ENCODE measurements at regions of chr1 and their contacts with region 1.

Region 1: GRCh38 chr1:45957684-45958083 is 154.3 kb downstream of the MAST2 start:
- DNase-seq: no peak
- ATAC-seq: peak in 3 of 4 donors; percentile 15 to 45 (median 22)
- H3K4me3 ChIP-seq: no peak overlapping the region
- H3K27ac ChIP-seq: peak overlapping the region; percentile 90
- H3K4me1 ChIP-seq: peaks cover 77% of the 10 kb centered on the region
- H3K27me3 ChIP-seq: no peaks in the 10 kb centered on the region
- CTCF ChIP-seq: no peak

Region 2: DNA sequence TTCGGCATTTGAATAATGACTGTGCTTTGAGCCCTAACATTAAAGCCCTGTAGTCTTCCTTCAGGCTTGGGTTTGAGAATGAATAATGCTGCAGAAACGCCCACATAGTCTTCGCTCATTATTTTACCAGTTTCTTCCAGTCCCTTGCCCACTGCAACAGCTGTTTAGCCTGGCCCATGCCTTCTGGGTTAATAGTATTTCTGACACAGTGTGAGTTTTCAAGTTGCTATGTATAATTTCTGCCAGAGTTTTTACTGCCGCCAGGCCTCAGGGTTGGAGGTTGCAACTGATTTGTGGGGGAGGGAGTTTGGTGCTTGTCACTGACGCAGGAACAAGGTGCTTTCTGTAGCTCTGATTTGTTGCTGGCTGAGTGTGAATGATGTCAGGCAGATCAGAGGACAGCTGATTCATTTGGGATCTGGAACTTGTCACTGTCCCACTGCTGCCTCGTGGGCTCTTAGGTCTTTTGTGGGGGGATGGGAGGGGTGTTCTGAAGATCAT is 44.5 kb before region 1 on chr1:
- intact Hi-C with region 1: loop called in 1 of 2 experiments (anchors 5 kb)
- DNase-seq: peak; percentile 57 to 83
- ATAC-seq: peak; percentile 88 to 92 (median 90)
- H3K4me3 ChIP-seq: peak overlapping the region; percentile 75
- H3K27ac ChIP-seq: peak overlapping the region; percentile 86
- H3K4me1 ChIP-seq: peaks cover 50% of the 10 kb centered on the region
- H3K27me3 ChIP-seq: no peaks in the 10 kb centered on the region
- CTCF ChIP-seq: no peak

Region 3: DNA sequence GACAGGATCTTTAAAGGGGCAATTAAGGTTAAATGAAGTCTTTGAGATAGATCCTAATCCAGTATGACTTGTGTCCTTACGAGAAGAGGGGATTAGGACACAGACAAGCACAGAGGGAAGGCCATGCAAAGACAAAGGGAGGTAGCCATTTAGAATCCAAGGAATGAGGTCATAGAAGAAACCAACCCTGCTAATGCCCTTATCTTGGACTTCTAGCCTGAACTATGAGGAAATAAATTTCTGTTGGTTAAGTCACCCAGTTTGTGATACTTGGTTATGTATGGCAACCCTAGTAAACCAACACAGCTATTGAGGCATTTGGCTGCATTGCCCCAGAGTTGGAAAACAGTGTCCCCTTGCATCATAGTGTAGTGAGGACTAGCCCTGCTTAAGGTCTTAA is 32.9 kb before region 1 on chr1:
- intact Hi-C with region 1: loop called in 1 of 2 experiments (anchors 5 kb)
- DNase-seq: no peak
- ATAC-seq: peak; percentile 20 to 75 (median 74)
- H3K4me3 ChIP-seq: peak overlapping the region; percentile 20
- H3K27ac ChIP-seq: peak overlapping the region; percentile 48
- H3K4me1 ChIP-seq: peaks cover 91% of the 10 kb centered on the region
- H3K27me3 ChIP-seq: no peaks in the 10 kb centered on the region
- CTCF ChIP-seq: no peak

Measured in psoas muscle (tissue), 8 donors.